Endothelial cell of umbilical vein (primary cell): ENCODE measurements at regions of chr20 and their contacts with region 1.

Region 1: GRCh38 chr20:38434743-38435554 is at the start of gene SNHG17:
- DNase-seq: peak; percentile 89
- H3K4me3 ChIP-seq: peak within 1 kb of the TSS; percentile 70 to 84 (median 77)
- H3K27ac ChIP-seq: peak within 1 kb of the TSS; percentile 14
- H3K4me1 ChIP-seq: peaks cover 18% of the 10 kb centered on the region
- H3K27me3 ChIP-seq: peaks cover 0 to 2% of the 10 kb centered on the region in 2 experiments
- CTCF ChIP-seq: peak; percentile 100
- POLR2A ChIP-seq: peak; percentile 96
- total RNA-seq, gene SNHG17: 39.6 and 94.0 TPM in 2 replicates

Region 2: DNA sequence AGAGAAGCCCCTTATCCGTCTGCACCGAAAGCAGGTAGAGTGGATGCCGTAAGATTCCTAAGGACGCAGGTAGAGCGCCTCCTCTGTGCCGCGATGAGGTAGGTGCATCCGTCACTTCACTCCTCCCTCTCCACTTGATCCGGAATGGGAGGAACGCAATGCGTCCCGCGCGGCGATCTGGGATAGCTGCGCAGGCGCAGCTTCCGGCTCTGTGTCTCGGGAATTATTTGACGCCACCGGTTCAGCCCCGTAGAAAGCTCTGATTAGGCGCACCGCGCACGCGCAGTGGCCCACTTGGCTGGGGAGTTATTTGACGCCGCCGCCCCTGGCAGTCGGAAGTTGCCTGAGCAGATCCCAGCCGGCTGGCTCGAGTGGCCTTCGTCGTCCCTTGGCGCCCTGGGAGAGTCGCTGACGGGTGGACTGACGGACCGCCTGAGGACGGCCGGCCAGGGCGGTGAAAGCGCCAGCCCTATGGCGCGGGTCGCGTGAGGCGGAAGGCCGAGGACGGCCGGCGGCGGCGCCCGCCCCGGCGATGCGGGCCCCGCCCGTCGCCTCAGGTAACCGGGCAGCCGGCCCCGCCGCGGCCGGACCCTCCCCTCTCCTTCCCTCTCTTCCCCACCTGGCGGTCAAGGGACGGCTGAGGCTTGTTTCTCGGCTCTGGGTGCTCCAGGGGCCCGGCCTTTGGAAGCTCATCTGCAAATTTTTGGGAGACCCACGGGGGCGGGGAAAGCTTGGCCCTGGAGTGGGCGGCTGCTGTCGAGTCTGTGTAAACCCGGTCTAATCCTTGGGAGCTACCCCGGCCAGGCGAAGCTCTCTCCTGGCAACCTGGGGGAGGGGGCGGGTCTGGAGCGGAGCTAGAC is 37.8 kb after region 1 on chr20 and contains the start of gene RALGAPB:
- CTCF ChIA-PET with region 1: interaction called, 37 read pairs
- POLR2A ChIA-PET with region 1: interaction called, 13 read pairs
- dilution Hi-C with region 1: no loop called
- intact Hi-C with region 1: loop called (anchors 1 kb)
- DNase-seq: peak; percentile 100
- H3K4me3 ChIP-seq: peak within 1 kb of the TSS; percentile 53 to 79 (median 70)
- H3K27ac ChIP-seq: peak within 1 kb of the TSS; percentile 50
- H3K4me1 ChIP-seq: peaks cover 15% of the 10 kb centered on the region
- H3K27me3 ChIP-seq: peaks cover 2 to 4% of the 10 kb centered on the region in 2 experiments
- CTCF ChIP-seq: peak; percentile 14 to 45
- POLR2A ChIP-seq: peak; percentile 51
- total RNA-seq, gene RALGAPB: 36.4 and 38.7 TPM in 2 replicates